A549 (cell line): ENCODE measurements at regions of chr9 and their contacts with region 1.

Region 1: GRCh38 chr9:110152704-110153374 is 55.1 kb downstream of the C9orf152 start:
- DNase-seq: peak; percentile 19 to 42
- ATAC-seq: peak; percentile 80 to 82
- H3K4me3 ChIP-seq: no peak overlapping the region
- H3K27ac ChIP-seq: 0 out of 6 replicates have a peak overlapping the region, but pooled peaks of 1 of the 2 experiments have one; percentile 12
- H3K4me1 ChIP-seq: no peaks in the 10 kb centered on the region
- CTCF ChIP-seq: peak; percentile 92
- EP300 ChIP-seq: no peak
- POLR2A ChIP-seq: no peak
- RAD21 ChIP-seq: peak; percentile 95

Region 2: GRCh38 chr9:110058304-110058953 is 94.4 kb before region 1 on chr9:
- CTCF ChIA-PET with region 1: interaction called, 36 read pairs
- POLR2A ChIA-PET with region 1: no interaction called
- DNase-seq: peak; percentile 62 to 78
- ATAC-seq: peak; percentile 94 to 97
- H3K4me3 ChIP-seq: no peak overlapping the region
- H3K27ac ChIP-seq: peak overlapping the region in 1 of 2 experiments; percentile 18; a peak in 1 of 6 replicates
- H3K4me1 ChIP-seq: peaks cover 10% of the 10 kb centered on the region
- CTCF ChIP-seq: peak; percentile 77
- EP300 ChIP-seq: no peak
- POLR2A ChIP-seq: no peak
- RAD21 ChIP-seq: peak; percentile 92 to 98

Region 3: DNA sequence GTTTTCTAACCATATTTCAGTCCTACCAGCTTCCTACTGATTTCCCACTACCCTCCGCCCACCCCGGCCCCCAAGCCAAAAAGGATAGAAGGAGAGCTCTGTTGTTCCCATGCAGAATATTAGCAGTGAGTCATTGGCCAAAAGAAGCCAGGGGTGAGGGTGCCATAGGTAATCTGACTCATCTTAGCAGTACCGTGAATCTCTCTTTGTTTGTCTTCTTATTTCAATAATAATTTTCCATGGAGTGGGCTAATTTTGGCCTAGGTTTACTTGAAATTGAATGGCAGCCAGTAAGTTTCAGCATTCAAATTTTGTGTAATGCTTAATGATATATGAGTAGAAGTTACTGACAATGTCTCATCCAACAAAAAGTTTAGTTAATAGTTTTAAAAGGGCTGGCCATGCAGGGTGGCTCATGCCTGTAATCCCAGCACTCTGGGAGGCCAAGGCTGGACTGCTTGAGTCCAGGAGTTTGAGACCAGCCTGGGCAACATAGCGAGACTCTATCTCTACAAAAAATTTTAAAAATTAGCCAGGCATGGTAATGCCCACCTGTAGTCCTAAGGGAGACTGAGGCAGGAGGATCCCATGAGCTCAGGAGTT is 19.1 kb before region 1 on chr9:
- CTCF ChIA-PET with region 1: interaction called, 15 read pairs
- POLR2A ChIA-PET with region 1: no interaction called
- DNase-seq: peak; percentile 53 to 59
- ATAC-seq: peak; percentile 84 to 85
- H3K4me3 ChIP-seq: no peak overlapping the region
- H3K27ac ChIP-seq: peak overlapping the region; percentile 18 to 69; a peak in 4 of 6 replicates
- H3K4me1 ChIP-seq: peaks cover 49% of the 10 kb centered on the region
- CTCF ChIP-seq: no peak
- EP300 ChIP-seq: no peak
- POLR2A ChIP-seq: no peak
- RAD21 ChIP-seq: no peak